Aorta (tissue), 5 donors: ENCODE measurements at regions of chr10 and their contacts with region 1.

Region 1: DNA sequence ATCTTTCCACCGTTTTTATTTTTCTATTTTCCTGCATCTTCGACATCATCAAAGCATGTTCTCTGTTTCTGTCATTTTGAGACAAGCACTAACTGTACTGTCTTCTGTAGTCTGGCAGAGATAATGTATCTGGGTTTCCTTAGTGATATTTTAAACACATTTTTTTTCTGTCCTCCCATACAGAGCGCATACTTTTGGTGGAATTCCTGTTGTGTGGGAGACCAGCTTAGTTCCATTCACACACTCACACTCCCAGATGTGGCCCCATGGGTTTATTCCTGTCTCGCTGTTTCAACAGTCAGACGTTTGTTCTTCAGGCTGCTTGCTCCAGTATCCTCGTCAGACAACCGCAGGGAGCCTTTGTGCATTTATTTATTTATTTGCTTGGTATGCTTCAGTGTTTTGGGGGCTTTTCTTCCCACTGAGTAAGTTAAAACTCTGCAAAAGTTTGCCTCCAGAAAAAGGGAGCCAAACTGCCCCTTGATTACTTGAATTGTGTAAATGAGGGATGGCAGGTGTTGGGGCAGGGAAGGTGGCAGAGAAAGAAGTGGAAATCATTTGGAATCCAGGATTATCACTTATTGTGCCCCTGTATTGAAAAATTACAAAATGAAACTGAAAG is 456.8 kb upstream of the KLF6 start:
- DNase-seq: no peak
- ATAC-seq: peak; percentile 73
- H3K4me3 ChIP-seq: peak overlapping the region; percentile 67 to 90
- H3K27ac ChIP-seq: peak overlapping the region; percentile 96 to 99
- H3K4me1 ChIP-seq: peaks cover 0 to 3% of the 10 kb centered on the region in 2 donors
- H3K27me3 ChIP-seq: no peaks in the 10 kb centered on the region

Region 2: GRCh38 chr10:3887885-3888476 is 353.9 kb before region 1 on chr10:
- intact Hi-C with region 1: loop called (anchors 5 kb)
- DNase-seq: peak; percentile 87 to 90
- ATAC-seq: peak; percentile 52
- H3K4me3 ChIP-seq: no peak overlapping the region
- H3K27ac ChIP-seq: peak overlapping the region; percentile 92 to 100
- H3K4me1 ChIP-seq: peaks cover 3 to 5% of the 10 kb centered on the region in 2 donors
- H3K27me3 ChIP-seq: no peaks in the 10 kb centered on the region

Region 3: DNA sequence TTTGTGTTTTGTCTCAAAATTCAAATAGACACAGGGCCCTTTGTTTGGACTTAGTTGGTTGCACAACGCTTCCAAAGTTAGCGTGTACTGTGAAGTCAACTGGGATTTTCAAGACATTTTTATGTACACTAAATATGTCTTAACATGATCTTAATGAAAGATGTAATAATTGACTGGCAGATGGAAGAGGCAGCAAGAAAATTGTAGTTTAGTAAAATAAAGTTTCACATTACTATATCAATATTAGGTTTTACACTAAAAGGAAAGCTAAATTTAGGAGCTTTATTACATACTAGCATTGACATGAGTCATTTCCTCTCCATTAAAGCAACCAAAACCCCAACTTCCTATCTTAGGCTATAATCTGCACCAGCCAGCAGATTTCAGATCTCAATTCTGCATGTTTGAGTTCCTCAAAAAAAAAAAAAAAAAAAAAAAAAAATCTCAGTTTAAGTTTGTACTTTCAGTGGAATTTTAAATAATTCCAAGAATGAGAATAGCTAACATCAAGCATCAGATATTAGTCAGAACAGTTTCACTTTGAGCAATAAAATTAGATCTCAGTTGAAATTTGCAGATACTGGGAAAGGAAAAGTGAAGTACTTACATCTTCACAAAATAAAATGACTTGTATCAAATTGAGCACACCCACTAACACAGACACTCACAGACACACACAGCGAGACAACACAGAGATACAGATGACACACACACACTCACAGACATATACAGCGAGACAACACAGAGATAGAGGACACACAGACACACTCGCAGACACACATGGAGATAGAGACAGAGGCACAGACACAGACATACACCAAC is 110.2 kb before region 1 on chr10:
- intact Hi-C with region 1: loop called in 1 of 2 experiments (anchors 5 kb)
- DNase-seq: no peak
- ATAC-seq: peak; percentile 84
- H3K4me3 ChIP-seq: no peak overlapping the region
- H3K27ac ChIP-seq: peak overlapping the region in 1 of 2 donors; percentile 71
- H3K4me1 ChIP-seq: peaks cover 1 to 2% of the 10 kb centered on the region in 2 donors
- H3K27me3 ChIP-seq: no peaks in the 10 kb centered on the region

Region 4: DNA sequence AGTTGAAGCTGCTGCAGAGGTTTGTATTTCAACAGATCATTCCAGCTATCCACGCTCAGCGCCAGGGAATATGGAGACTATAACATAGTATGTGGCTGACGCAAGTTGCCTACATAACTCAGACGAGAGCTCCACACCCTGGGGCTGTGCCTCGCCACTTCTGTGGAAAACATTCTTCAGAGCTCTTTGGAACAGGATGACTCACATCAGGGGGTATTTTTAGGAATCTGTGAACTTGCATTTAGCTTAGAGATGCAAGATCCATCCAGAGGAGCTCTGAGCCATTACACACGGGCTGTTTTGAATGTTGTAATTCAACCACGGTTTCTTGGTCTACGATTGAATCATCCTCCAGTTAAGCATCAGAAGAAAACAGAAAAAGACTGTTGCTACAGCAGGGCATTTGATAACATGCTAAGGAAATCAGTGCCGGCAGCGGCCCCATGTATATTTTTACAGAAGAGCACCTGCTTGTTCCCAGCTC is 102.7 kb after region 1 on chr10:
- intact Hi-C with region 1: loop called in 1 of 2 experiments (anchors 2 kb)
- DNase-seq: peak; percentile 88 to 89
- ATAC-seq: peak; percentile 84
- H3K4me3 ChIP-seq: no peak overlapping the region
- H3K27ac ChIP-seq: peak overlapping the region; percentile 48 to 96
- H3K4me1 ChIP-seq: no peaks in the 10 kb centered on the region
- H3K27me3 ChIP-seq: no peaks in the 10 kb centered on the region

Region 5: DNA sequence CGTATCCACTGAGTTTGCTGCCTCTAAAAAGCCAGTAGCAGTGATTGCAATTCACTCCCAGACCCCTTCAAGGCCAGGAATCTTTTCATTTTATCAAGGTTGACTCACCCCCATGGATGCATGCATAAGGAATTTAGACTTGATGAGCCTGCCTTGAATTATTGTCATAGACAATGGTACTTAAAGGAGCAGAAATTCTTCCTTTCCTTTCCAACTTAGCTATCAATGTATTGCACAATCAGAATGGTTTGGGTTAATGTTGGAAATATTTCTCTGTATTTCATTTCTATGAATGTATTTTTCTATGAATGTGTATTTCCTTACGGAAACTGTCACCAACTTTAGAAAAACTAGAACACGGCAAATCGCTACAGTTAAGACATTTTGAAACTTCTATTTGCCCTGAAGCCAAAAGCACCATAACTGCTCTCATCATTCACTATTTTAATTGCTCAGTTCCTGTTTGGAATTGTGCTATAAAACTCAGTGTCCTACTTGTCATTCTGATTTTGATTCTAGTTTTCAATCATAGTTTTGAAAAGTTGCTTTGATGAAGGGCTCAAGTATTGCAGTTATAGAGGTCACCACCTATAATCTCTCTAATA is 228.5 kb after region 1 on chr10:
- intact Hi-C with region 1: no loop called
- DNase-seq: no peak
- ATAC-seq: no peak
- H3K4me3 ChIP-seq: no peak overlapping the region
- H3K27ac ChIP-seq: no peak overlapping the region
- H3K4me1 ChIP-seq: no peaks in the 10 kb centered on the region
- H3K27me3 ChIP-seq: no peaks in the 10 kb centered on the region

Region 6: DNA sequence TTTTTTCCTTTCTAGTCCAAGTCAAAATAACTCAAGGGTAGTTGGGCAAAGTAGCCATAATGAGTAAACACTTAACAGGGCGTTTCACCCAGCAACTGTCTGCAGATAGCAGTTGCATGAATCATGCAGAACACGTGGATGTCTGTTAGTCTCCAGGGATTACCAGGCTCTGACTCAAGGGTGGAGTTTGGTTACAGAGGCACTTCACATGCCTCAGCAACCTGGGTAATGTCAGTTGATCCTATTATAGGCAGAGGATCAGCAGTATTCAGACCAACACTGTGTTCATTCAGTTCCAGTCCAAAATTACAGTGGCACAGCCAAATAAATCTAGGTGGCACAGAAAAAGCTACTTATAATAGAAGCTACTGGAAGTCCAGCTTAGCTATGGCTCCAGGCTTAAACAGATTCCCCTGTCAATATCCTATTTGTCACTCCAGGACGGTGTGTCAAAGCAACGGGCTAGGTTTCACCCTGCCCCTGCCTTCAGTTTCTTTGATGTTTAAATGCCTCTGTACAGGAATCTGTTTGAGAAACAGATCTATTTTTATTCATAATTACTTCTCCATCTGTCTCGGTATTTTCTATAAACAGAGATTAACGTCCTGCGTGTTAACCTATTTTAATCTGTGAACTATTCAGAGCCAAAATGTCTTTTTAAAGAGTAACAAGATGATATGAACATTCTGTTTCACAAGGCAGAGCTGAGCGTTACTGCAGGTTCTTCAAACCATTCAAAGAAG is 421.5 kb after region 1 on chr10:
- intact Hi-C with region 1: loop called (anchors 5 kb)
- DNase-seq: peak in 1 of 2 donors; percentile 67
- ATAC-seq: peak; percentile 93
- H3K4me3 ChIP-seq: peak overlapping the region in 1 of 2 donors; percentile 10
- H3K27ac ChIP-seq: peak overlapping the region; percentile 89 to 95
- H3K4me1 ChIP-seq: peaks cover 0 to 7% of the 10 kb centered on the region in 2 donors
- H3K27me3 ChIP-seq: no peaks in the 10 kb centered on the region